Activated naive CD4-positive, alpha-beta T cell treated with anti-CD3 and anti-CD28 coated beads for 36 hours (primary cell): ENCODE measurements at regions of chr2 and their contacts with region 1.

Region 1: GRCh38 chr2:190718652-190719526 is 70.0 kb downstream of the NAB1 start:
- DNase-seq: peak; percentile 93
- H3K4me3 Mint-ChIP-seq: peak overlapping the region; percentile 0
- H3K27ac Mint-ChIP-seq: peak overlapping the region; percentile 60
- H3K4me1 Mint-ChIP-seq: peaks cover 65% of the 10 kb centered on the region
- H3K27me3 Mint-ChIP-seq: no peaks in the 10 kb centered on the region

Region 2: DNA sequence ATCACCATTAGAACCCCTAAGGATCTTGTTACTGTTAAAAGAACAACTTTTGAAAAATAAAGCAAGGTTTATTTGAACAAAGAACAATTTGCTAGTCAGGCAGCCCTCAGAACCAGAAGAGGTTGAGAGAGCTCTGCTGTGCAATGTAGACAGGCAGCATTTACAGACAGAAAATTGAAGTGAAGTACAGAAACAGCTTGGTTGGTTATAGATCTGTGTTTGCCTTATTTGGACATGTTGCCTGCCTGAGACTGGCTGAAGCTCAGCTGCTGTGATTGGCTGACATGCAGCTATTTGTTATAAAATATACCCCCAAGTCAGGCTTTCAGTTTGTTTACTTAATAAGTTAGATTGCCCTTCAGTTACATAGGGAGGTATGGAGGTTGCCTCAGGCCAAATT is 668.9 kb before region 1 on chr2:
- CTCF ChIA-PET with region 1: no interaction called
- intact Hi-C with region 1: no loop called
- DNase-seq: no peak
- H3K4me3 Mint-ChIP-seq: no peak overlapping the region
- H3K27ac Mint-ChIP-seq: no peak overlapping the region
- H3K4me1 Mint-ChIP-seq: no peaks in the 10 kb centered on the region
- H3K27me3 Mint-ChIP-seq: peaks cover 5% of the 10 kb centered on the region

Region 3: GRCh38 chr2:190408538-190409271 is 310.2 kb before region 1 on chr2:
- CTCF ChIA-PET with region 1: no interaction called
- intact Hi-C with region 1: loop called (anchors 1 kb)
- DNase-seq: peak; percentile 71
- H3K4me3 Mint-ChIP-seq: peak overlapping the region; percentile 84
- H3K27ac Mint-ChIP-seq: peak overlapping the region; percentile 90
- H3K4me1 Mint-ChIP-seq: peaks cover 46% of the 10 kb centered on the region
- H3K27me3 Mint-ChIP-seq: no peaks in the 10 kb centered on the region

Region 4: DNA sequence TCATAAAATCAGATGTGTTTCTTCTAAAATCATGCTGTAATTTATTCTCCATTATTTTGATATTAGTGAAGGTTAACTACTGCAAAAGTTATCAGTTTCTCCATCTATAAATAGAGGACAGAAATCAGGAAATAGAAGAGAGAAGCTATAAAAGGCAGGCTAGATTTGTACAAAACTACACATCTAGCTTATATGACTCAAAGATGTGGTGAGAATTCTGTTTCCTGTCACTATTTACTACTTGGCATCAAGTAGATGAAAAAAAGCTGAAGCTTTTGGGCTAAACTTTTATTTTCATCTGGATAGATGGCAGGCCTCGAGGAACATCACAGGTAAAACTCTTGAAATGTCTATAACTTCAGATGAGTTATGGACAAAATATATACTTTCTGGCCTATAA is 119.8 kb before region 1 on chr2:
- CTCF ChIA-PET with region 1: no interaction called
- intact Hi-C with region 1: no loop called
- DNase-seq: no peak
- H3K4me3 Mint-ChIP-seq: no peak overlapping the region
- H3K27ac Mint-ChIP-seq: no peak overlapping the region
- H3K4me1 Mint-ChIP-seq: peaks cover 10% of the 10 kb centered on the region
- H3K27me3 Mint-ChIP-seq: no peaks in the 10 kb centered on the region

Region 5: DNA sequence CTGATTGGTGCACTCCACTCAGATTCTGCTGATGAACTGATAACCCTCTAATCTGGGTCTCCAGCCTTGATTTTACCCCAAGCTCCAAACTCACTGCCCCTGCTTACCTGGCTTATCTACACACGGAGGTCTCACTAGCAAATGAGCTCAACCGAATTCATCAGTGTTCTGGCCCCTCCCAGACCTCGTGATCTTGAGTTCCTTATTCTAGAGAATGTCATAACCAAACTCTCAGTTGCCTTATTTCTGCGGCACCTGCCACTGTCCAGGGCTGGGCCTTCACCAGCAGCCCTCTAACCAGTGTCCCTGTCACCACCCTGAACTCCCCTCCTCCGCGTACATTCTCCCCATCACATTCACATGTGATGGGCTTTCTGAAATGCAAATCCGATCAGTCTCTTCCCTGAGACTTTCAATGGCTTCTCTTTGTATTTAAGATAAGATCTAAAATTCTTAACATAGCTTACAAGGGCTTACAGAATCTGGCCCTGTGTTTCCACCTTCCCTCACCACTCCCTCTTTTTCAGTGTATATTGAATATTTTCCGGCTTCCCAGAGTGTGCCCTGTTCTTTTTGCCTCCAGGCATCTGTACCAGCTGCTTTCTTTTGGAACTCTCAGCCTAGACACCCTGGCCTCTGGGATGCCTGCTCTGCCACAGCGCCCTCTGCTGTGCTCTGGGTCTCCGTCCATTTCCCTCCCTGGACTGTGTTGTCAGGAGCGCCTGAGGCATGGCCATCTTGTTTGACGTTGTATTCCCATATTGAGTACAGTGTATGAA is 38.9 kb before region 1 on chr2:
- CTCF ChIA-PET with region 1: interaction called, 7 read pairs
- intact Hi-C with region 1: loop called (anchors 1 kb)
- DNase-seq: peak; percentile 75
- H3K4me3 Mint-ChIP-seq: peak overlapping the region; percentile 13
- H3K27ac Mint-ChIP-seq: peak overlapping the region; percentile 81
- H3K4me1 Mint-ChIP-seq: peaks cover 52% of the 10 kb centered on the region
- H3K27me3 Mint-ChIP-seq: no peaks in the 10 kb centered on the region

Region 6: GRCh38 chr2:190791347-190791975 is 72.6 kb after region 1 on chr2:
- CTCF ChIA-PET with region 1: no interaction called
- intact Hi-C with region 1: loop called (anchors 1 kb)
- DNase-seq: peak; percentile 67
- H3K4me3 Mint-ChIP-seq: no peak overlapping the region
- H3K27ac Mint-ChIP-seq: peak overlapping the region; percentile 83
- H3K4me1 Mint-ChIP-seq: peaks cover 55% of the 10 kb centered on the region
- H3K27me3 Mint-ChIP-seq: no peaks in the 10 kb centered on the region

Region 7: GRCh38 chr2:191078165-191078867 is 359.4 kb after region 1 on chr2:
- CTCF ChIA-PET with region 1: no interaction called
- intact Hi-C with region 1: loop called (anchors 1 kb)
- DNase-seq: no peak
- H3K4me3 Mint-ChIP-seq: peak overlapping the region; percentile 61
- H3K27ac Mint-ChIP-seq: peak overlapping the region; percentile 82
- H3K4me1 Mint-ChIP-seq: peaks cover 54% of the 10 kb centered on the region
- H3K27me3 Mint-ChIP-seq: no peaks in the 10 kb centered on the region

Region 8: GRCh38 chr2:191677646-191678436 is 959.0 kb after region 1 on chr2 and contains the start of gene NABP1:
- CTCF ChIA-PET with region 1: no interaction called
- intact Hi-C with region 1: loop called (anchors 10 kb)
- DNase-seq: peak; percentile 99
- H3K4me3 Mint-ChIP-seq: peak within 1 kb of the TSS; percentile 99
- H3K27ac Mint-ChIP-seq: peak within 1 kb of the TSS; percentile 100
- H3K4me1 Mint-ChIP-seq: peaks cover 37% of the 10 kb centered on the region
- H3K27me3 Mint-ChIP-seq: no peaks in the 10 kb centered on the region
- total RNA-seq, gene NABP1: 97.5 to 101 TPM

Region 9: DNA sequence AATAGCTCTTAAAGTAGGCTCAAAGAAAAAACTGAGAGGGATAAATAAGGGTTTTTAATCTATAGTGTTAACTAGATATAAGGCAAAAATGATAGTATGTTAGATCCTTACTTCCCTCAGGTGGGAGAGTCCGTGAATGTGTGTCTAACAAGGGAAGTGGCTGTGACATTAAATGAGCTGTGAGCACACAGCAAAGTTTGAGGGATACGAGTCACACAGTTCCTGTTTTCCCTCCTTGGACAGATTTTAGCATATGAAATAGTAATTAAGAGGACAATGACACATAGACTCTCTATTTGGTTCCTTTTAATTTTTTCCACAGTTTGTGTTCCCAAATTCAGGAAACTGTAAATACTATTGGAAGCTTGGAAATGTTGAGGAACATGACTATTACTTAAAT is 1276.4 kb after region 1 on chr2:
- CTCF ChIA-PET with region 1: no interaction called
- intact Hi-C with region 1: no loop called
- DNase-seq: no peak
- H3K4me3 Mint-ChIP-seq: no peak overlapping the region
- H3K27ac Mint-ChIP-seq: no peak overlapping the region
- H3K4me1 Mint-ChIP-seq: no peaks in the 10 kb centered on the region
- H3K27me3 Mint-ChIP-seq: peaks cover 10% of the 10 kb centered on the region